ENCODE measurements at regions of chr18 and their contacts with region 1.

Region 1: DNA sequence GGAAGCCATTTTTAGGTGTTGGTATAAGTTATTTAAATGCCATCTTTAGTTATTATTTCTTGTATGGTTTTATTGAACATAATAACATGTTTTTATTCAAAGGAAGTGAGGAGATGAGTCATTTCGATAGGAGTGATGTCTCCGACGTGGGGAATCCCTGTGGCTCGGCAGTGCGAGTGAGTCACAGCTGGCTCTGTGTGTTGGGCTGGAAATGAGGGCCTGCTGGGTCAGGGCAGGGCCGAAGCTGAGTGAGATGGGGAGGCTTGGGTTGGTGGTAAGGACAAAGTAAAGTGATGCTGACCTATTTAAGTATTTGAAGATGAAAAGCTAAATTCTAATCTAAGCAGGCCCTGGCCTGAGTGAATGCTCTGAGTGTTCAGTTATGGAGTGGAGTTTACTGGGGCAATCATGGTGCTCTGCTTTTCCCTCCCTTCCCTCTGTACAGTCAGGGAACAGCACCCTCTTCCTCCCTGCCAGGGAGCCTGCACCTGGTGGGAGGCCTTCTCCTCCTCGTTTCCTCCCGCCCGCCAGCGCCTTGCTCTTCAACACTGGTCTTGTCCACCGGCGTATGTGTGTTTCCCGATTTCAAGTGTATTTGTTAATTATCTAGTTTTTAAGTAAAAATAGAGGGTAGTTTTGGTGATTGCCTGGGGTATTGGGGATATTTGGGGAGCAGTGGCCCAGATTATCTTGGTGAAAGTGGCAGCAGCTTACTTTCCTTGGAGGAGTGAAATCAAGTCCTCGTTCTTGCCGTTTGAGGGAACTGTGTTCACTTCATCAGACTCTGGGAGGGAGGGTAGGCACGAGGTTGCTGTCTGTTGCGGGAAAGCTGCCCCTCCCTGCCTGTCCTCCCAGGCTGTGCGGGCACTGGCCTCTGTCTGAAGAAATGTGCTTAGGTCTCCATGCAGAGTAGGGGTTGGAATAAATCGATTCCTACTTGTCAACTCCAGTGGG is 157.0 kb downstream of the LDLRAD4 start:
- DNase-seq: peak; percentile 55 to 92 (median 74)
- ATAC-seq: peak; percentile 69
- H3K4me3 ChIP-seq: peak overlapping the region; percentile 35
- H3K4me3 Mint-ChIP-seq: peak overlapping the region; percentile 86
- H3K27ac ChIP-seq: peak overlapping the region; percentile 89 to 92
- H3K27ac Mint-ChIP-seq: peak overlapping the region; percentile 90
- H3K4me1 ChIP-seq: peaks cover 81% of the 10 kb centered on the region
- H3K4me1 Mint-ChIP-seq: peaks cover 78% of the 10 kb centered on the region
- H3K27me3 ChIP-seq: no peaks in the 10 kb centered on the region
- H3K27me3 Mint-ChIP-seq: no peaks in the 10 kb centered on the region
- CTCF ChIP-seq: no peak

Region 2: GRCh38 chr18:13279181-13280069 is 96.2 kb before region 1 on chr18:
- CTCF ChIA-PET with region 1: no interaction called
- POLR2A ChIA-PET with region 1: interaction called, 3 read pairs
- intact Hi-C with region 1: loop called (anchors 5 kb)
- DNase-seq: peak in 11 of 14 experiments; percentile 24 to 61 (median 42)
- ATAC-seq: peak; percentile 58
- H3K4me3 ChIP-seq: peak overlapping the region; percentile 48
- H3K4me3 Mint-ChIP-seq: peak overlapping the region; percentile 86
- H3K27ac ChIP-seq: peak overlapping the region in 1 of 2 donors; percentile 44
- H3K27ac Mint-ChIP-seq: peak overlapping the region; percentile 90
- H3K4me1 ChIP-seq: peaks cover 80% of the 10 kb centered on the region
- H3K4me1 Mint-ChIP-seq: peaks cover 80% of the 10 kb centered on the region
- H3K27me3 ChIP-seq: no peaks in the 10 kb centered on the region
- H3K27me3 Mint-ChIP-seq: no peaks in the 10 kb centered on the region
- CTCF ChIP-seq: no peak

Region 3: DNA sequence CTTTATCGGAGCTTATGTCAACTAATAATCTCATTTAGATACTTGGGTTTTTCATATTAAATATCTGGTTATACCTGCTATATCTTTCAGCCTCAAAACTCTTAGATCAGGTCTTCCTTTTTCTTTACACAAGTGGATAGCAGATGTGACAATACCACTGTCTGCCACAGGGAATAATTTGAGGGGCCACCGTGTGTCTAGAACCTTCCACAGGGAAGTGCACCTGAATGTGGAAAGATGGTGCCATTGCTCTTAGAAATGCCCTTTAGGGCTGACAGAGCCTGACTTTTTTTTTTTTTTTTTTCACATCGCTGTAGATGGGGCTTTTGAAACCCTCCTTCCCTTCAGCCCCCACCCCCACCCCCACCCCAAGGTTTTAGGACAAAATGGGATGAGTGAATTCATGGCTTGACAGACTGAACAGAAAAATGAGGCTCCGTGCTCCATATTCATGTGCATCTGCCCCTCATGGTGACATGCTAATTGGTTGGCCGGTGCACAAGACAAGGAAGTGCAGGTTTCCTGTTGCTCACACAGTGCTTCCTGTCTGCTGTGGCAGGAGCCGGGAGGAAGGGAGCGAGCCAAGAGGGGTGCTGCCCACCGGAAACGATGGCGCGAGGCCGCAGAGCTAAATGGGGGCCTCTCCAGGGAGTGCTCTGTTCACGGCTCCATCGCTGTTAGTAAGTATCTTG is 89.0 kb after region 1 on chr18:
- CTCF ChIA-PET with region 1: no interaction called
- POLR2A ChIA-PET with region 1: interaction called, 4 read pairs
- intact Hi-C with region 1: loop called (anchors 2 to 5 kb)
- DNase-seq: peak; percentile 36 to 86 (median 68)
- ATAC-seq: peak; percentile 95
- H3K4me3 ChIP-seq: peak overlapping the region; percentile 63
- H3K4me3 Mint-ChIP-seq: peak overlapping the region; percentile 91
- H3K27ac ChIP-seq: peak overlapping the region; percentile 60 to 64
- H3K27ac Mint-ChIP-seq: peak overlapping the region; percentile 97
- H3K4me1 ChIP-seq: peaks cover 50% of the 10 kb centered on the region
- H3K4me1 Mint-ChIP-seq: peaks cover 86% of the 10 kb centered on the region
- H3K27me3 ChIP-seq: no peaks in the 10 kb centered on the region
- H3K27me3 Mint-ChIP-seq: no peaks in the 10 kb centered on the region
- CTCF ChIP-seq: peak; percentile 19

Region 4: DNA sequence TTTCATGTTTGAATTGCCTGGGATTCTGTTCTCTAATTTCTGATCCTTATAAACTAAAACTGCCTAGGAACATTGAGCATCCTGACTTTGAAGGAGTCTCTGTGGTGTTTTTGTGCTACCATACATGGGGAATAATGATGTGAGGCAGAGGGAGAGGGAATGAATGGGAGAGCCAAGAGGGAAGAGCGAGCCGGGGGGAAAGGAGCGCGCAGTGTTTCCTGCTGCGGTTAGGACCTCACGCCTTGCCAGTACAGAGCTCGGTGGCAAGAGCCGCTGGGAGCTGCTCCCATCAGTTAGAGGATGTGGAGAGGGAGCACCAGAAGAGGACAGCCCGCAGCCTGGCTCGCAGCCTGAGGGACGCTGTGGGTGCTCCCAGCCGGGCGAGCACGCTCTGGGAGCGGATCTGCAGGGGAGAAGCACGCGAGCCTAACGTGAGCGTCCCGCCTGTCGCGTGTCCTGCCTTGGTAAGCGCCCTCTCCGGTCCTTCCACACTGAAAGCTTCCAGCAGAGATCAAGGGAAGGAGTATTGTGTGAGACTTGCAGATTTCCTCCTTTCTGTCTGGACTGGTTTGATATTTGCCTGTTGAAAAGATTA is 236.1 kb after region 1 on chr18:
- CTCF ChIA-PET with region 1: no interaction called
- POLR2A ChIA-PET with region 1: no interaction called
- intact Hi-C with region 1: loop called in 1 of 2 experiments (anchors 5 kb)
- DNase-seq: peak in 1 of 14 experiments; percentile 12
- ATAC-seq: no peak
- H3K4me3 ChIP-seq: peak overlapping the region; percentile 51
- H3K4me3 Mint-ChIP-seq: peak overlapping the region; percentile 86
- H3K27ac ChIP-seq: peak overlapping the region; percentile 13 to 38
- H3K27ac Mint-ChIP-seq: peak overlapping the region; percentile 90
- H3K4me1 ChIP-seq: peaks cover 82% of the 10 kb centered on the region
- H3K4me1 Mint-ChIP-seq: peaks cover 85% of the 10 kb centered on the region
- H3K27me3 ChIP-seq: no peaks in the 10 kb centered on the region
- H3K27me3 Mint-ChIP-seq: no peaks in the 10 kb centered on the region
- CTCF ChIP-seq: no peak

Measured in CD4-positive, alpha-beta T cell (primary cell).